MCF 10A (cell line): ENCODE measurements at regions of chr2 and their contacts with region 1.

Region 1: DNA sequence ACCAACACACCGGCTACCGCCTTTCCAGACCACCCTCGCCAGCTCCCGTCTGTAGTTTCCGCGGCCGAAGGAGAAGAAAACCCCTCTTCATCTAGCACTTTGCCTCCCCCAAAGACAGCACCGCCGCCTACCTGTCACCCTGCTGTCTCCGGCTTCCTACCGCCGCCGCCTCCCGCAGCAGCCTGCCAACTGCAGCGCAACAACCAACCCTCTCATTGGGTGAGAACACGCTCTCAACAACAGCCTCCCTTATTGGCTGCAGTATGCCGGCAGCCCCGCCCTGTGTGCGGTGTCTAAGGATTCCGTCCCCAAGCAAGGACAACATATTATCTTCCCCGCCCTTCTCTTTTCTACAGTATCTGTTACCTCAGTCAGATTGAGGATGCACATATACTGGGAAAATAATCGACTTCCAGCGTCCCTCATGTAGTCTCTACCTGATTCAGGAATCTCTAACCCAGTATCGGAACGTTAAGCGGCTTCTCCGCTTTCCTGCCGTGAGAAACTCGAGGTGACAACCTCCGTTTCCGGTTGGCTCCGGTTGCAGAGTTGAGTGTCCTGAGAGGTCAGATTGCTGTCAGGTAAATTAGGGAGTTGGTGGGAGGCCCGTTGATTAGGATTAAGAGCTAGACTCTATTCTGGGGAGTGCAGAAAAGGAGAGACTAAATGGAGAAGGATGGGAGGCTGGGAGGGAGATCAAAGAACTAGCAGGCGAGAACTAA is at the starts of genes HYCC2 and NDUFB3:
- DNase-seq: peak; percentile 93
- H3K4me3 Mint-ChIP-seq: peak within 1 kb of the TSS; percentile 81
- H3K27ac Mint-ChIP-seq: peak within 1 kb of the TSS; percentile 89
- H3K4me1 Mint-ChIP-seq: peaks cover 25% of the 10 kb centered on the region
- H3K27me3 Mint-ChIP-seq: no peaks in the 10 kb centered on the region
- CTCF ChIP-seq: no peak
- total RNA-seq, gene HYCC2: 13.7 and 13.9 TPM in 2 replicates
- total RNA-seq, gene NDUFB3: 78.0 and 94.9 TPM in 2 replicates

Region 2: DNA sequence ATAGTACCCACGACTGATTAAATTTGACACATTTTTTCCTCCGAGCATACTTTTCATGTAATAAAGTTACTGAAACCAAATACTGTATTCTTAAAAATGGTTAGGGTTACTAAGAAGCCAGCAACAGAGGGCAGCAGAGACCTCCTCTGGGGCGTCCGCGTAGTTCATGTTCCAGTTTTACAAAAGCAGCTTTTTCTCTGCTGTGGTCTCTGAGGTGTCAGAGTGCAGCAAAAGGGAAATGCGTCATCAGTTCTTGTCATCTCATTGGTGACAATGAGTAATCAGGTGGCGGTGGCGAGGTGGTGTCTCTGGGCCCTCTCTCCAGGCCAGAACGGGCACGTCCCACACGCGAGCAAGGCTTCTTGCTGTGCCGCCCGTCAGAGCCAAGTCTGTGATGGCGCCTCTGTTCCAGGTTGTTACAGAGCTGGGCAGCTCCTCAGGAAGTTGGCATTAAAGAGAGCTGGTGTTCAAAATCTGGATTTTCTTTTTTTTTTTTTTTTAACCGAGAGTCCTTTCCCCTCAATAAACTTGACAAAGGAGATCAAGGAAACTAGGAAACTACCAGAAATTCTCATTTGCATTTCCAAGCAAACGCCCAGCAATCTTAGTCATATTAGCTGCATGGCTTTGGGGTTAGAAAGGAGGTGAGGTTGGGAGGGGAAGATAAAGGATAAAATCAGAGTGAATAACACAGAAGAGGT is 358.5 kb before region 1 on chr2:
- CTCF ChIA-PET with region 1: interaction called, 5 read pairs
- POLR2A ChIA-PET with region 1: interaction called, 3 read pairs
- intact Hi-C with region 1: loop called (anchors 1 kb)
- DNase-seq: peak; percentile 88
- H3K4me3 Mint-ChIP-seq: peak overlapping the region; percentile 66
- H3K27ac Mint-ChIP-seq: peak overlapping the region; percentile 76
- H3K4me1 Mint-ChIP-seq: peaks cover 11% of the 10 kb centered on the region
- H3K27me3 Mint-ChIP-seq: peaks cover under 1% of the 10 kb centered on the region
- CTCF ChIP-seq: peak; percentile 94

Region 3: GRCh38 chr2:200901459-200902072 is 170.1 kb before region 1 on chr2:
- CTCF ChIA-PET with region 1: interaction called, 94 read pairs
- POLR2A ChIA-PET with region 1: interaction called, 29 read pairs
- intact Hi-C with region 1: loop called (anchors 1 kb)
- DNase-seq: peak; percentile 90
- H3K4me3 Mint-ChIP-seq: no peak overlapping the region
- H3K27ac Mint-ChIP-seq: no peak overlapping the region
- H3K4me1 Mint-ChIP-seq: no peaks in the 10 kb centered on the region
- H3K27me3 Mint-ChIP-seq: no peaks in the 10 kb centered on the region
- CTCF ChIP-seq: peak; percentile 88

Region 4: GRCh38 chr2:200963124-200963917 is 108.3 kb before region 1 on chr2 and contains the start of gene ORC2:
- CTCF ChIA-PET with region 1: interaction called, 38 read pairs
- POLR2A ChIA-PET with region 1: interaction called, 87 read pairs
- intact Hi-C with region 1: loop called (anchors 1 kb)
- DNase-seq: peak; percentile 96
- H3K4me3 Mint-ChIP-seq: peak within 1 kb of the TSS; percentile 86
- H3K27ac Mint-ChIP-seq: peak within 1 kb of the TSS; percentile 76
- H3K4me1 Mint-ChIP-seq: peaks cover 52% of the 10 kb centered on the region
- H3K27me3 Mint-ChIP-seq: no peaks in the 10 kb centered on the region
- CTCF ChIP-seq: peak; percentile 61
- total RNA-seq, gene ORC2: 51.5 and 54.4 TPM in 2 replicates

Region 5: DNA sequence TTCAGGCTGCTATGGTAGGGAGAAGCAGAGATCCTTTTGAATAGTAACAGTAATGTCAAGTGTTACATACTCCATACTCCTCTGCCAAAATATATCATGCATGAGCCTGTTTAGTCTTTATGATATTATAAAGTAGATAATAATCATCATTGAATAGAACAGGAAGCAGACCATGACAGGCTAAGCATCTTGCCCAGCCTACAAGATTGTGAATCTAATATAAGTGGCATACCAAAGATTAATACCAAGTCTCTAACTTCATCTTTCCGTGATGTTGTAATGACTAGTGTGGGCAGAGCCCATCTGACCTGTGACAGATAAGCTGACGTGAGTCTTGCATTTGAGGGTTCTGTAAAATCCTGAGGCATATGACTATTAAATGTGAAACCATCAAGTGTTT is 13.2 kb after region 1 on chr2:
- CTCF ChIA-PET with region 1: interaction called, 11 read pairs
- POLR2A ChIA-PET with region 1: interaction called, 3 read pairs
- intact Hi-C with region 1: no loop called
- DNase-seq: no peak
- H3K4me3 Mint-ChIP-seq: no peak overlapping the region
- H3K27ac Mint-ChIP-seq: no peak overlapping the region
- H3K4me1 Mint-ChIP-seq: no peaks in the 10 kb centered on the region
- H3K27me3 Mint-ChIP-seq: no peaks in the 10 kb centered on the region
- CTCF ChIP-seq: no peak

Region 6: GRCh38 chr2:201151127-201151981 is 79.7 kb after region 1 on chr2:
- CTCF ChIA-PET with region 1: interaction called, 10 read pairs
- POLR2A ChIA-PET with region 1: interaction called, 12 read pairs
- intact Hi-C with region 1: loop called (anchors 2 kb)
- DNase-seq: peak; percentile 72
- H3K4me3 Mint-ChIP-seq: peak overlapping the region; percentile 46
- H3K27ac Mint-ChIP-seq: peak overlapping the region; percentile 97
- H3K4me1 Mint-ChIP-seq: peaks cover 45% of the 10 kb centered on the region
- H3K27me3 Mint-ChIP-seq: no peaks in the 10 kb centered on the region
- CTCF ChIP-seq: no peak

Region 7: GRCh38 chr2:201280191-201281040 is 208.8 kb after region 1 on chr2:
- CTCF ChIA-PET with region 1: no interaction called
- POLR2A ChIA-PET with region 1: no interaction called
- intact Hi-C with region 1: no loop called
- DNase-seq: no peak
- H3K4me3 Mint-ChIP-seq: no peak overlapping the region
- H3K27ac Mint-ChIP-seq: no peak overlapping the region
- H3K4me1 Mint-ChIP-seq: no peaks in the 10 kb centered on the region
- H3K27me3 Mint-ChIP-seq: no peaks in the 10 kb centered on the region
- CTCF ChIP-seq: no peak